ENCODE measurements at regions of chr17 and their contacts with region 1.

Region 1: DNA sequence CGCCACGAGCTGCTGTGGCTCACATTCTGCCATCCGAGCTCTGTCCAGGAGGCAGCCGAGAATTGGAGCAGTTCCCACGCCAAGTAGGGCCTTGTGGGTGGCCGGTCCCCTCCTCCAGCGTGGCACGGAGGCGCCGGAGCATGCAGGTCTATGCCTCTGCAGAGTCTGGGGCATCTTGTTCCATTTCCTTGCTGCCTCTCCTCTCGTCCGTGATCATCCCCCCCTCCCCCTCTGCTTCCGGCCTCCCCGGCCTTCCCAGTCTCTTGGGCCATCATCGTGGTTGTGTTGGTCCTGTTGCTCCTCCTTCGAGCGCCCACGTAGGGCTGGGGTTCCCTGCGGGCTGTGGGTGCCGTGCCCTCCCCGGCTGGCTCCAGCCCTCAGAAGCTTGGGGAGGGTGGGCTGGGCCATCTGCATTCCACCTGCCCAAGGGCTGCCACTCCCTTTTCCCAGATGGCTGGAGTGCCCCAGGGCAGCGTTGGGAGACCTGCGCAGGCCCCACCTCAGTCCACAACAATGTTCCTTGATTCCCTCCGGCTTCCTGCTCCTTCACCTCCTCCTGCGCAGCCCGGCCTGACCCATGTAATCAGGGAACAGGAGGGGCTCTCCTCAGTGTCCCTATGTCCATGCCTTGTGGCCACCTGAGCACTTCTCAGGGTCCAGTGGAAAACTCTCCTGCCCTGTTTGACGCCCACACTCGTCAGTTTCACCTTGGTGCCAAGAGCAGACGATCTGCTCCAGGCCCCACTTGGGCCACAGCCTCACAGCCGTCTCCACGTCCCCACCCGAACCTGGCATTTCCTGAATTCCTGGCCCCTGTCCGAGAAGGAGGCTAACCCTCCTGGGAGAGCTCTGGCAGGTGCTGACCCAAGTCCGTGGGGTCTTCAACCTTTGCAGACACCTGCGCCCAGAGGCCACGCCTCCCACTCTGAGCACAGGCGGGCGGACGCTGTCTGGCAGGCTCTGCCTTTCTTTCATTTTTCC is 37.1 kb downstream of the BAIAP2 start:
- DNase-seq: no peak
- H3K4me3 ChIP-seq: no peak overlapping the region
- H3K27ac ChIP-seq: peak overlapping the region; percentile 48 to 66
- H3K4me1 ChIP-seq: peaks cover 5 to 10% of the 10 kb centered on the region in 2 donors
- H3K27me3 ChIP-seq: no peaks in the 10 kb centered on the region
- CTCF ChIP-seq: no peak
- POLR2A ChIP-seq: no peak

Region 2: GRCh38 chr17:79325709-79326430 is 1746.2 kb before region 1 on chr17:
- intact Hi-C with region 1: no loop called
- DNase-seq: no peak
- H3K4me3 ChIP-seq: no peak overlapping the region
- H3K27ac ChIP-seq: no peak overlapping the region
- H3K4me1 ChIP-seq: no peaks in the 10 kb centered on the region
- H3K27me3 ChIP-seq: peaks cover 0 to 94% of the 10 kb centered on the region in 2 donors
- CTCF ChIP-seq: no peak
- POLR2A ChIP-seq: no peak

Region 3: DNA sequence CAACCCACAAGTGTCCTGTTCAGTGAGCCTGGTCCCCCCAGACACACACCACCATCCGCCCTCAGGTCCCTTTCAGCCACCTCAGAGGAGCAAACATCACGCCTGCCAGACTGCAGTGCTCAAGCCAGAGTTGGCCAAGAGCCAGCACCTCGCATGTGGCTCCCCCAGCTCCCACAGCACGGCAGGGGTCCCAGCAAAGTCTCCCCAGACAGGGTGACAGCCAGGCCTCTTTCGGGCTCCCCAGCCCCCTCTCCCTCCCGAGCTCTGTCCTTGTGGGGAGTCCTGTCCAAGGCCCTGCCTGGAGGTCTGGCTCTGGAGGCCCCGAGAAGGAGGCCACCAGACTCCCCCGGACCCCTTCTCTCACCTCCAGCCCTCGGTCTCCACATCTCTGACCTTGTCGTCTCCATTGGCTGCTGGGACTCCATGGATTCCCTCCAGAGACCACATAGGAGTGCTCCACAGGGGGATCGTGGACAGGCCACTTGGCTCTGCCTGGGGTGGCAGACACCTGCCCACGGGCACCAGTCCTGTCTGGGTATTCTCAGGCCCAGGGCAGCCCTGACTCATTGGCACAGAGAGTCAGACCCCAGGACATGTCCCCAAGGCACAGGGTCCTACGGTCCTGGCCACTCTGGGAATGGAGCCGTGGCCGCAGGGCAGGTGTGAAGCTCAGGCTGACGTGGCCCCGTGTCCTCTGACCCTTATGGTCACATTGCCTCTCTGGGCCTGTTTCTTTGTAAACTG is 876.8 kb after region 1 on chr17:
- intact Hi-C with region 1: loop called (anchors 5 kb)
- DNase-seq: no peak
- H3K4me3 ChIP-seq: no peak overlapping the region
- H3K27ac ChIP-seq: no peak overlapping the region
- H3K4me1 ChIP-seq: no peaks in the 10 kb centered on the region
- H3K27me3 ChIP-seq: no peaks in the 10 kb centered on the region
- CTCF ChIP-seq: no peak
- POLR2A ChIP-seq: no peak